ENCODE measurements at regions of chr19 and their contacts with region 1.

Region 1: DNA sequence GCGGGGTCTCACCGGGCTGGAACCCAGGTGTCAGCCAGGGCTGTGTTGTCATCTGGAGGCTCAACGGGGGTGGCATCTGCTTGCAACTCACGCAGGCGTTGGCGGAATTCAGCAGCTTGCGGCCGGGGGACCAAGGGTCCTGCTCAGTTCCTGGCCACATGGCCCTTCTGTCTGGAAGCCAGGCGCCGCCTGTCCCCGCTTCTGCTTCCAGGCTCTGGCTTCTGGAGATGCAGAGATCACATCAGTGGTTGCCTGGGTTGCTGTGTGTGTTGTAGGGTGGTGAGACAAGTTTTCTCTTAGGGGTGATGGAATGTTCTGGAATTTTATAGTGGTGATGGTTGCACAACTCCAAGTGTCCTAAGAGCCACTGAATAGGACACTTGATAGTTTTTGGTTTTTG is 5.0 kb downstream of the ADAT3 start:
- DNase-seq: no peak
- ATAC-seq: no peak
- H3K4me3 ChIP-seq: no peak overlapping the region
- H3K27ac ChIP-seq: no peak overlapping the region
- H3K4me1 ChIP-seq: peaks cover 12% of the 10 kb centered on the region; the same call in 1 of the 3 replicates
- CTCF ChIP-seq: no peak
- EP300 ChIP-seq: no peak
- POLR2A ChIP-seq: no peak
- RAD21 ChIP-seq: no peak

Region 2: DNA sequence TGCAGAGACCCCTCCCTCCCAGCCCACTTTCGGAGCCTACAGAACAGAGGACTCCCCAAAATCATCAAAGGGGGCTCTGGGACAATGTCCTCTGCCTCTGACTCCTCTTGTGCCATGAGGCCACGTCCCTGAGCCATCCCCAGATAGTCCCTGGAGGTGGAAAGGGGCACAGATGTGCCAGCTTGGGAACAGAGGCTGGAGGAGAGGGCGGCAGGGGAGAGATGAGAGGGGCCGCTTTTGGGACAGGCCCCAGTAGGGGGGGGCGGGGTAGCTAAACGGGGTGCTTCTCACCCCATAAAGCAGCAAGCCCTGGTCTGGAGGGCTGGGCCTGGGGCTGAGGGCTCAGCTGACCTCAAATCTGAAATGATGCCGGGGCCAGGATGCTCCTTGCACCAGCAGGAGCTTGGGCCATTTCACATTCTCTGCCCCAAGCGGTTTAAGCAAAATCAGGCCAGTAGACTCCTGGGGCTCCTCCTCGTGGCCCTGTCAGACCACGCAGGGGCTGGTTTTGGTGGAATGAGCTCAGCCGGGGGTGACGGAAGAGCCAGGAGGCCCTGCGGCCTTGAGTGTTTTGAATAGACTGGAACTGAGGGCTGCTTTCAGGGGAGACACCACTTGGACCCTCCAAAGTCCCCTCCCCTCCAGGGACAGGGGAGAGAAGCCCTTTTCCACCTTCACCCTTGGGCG is 129.8 kb before region 1 on chr19:
- CTCF ChIA-PET with region 1: no interaction called
- POLR2A ChIA-PET with region 1: no interaction called
- DNase-seq: peak in 1 of 2 experiments; percentile 53
- ATAC-seq: peak; percentile 66 to 78; a peak in 5 of 6 replicates
- H3K4me3 ChIP-seq: no peak overlapping the region
- H3K27ac ChIP-seq: no peak overlapping the region
- H3K4me1 ChIP-seq: no peaks in the 10 kb centered on the region
- CTCF ChIP-seq: no peak
- EP300 ChIP-seq: no peak
- POLR2A ChIP-seq: no peak
- RAD21 ChIP-seq: no peak; a peak in 1 of 5 replicates

Region 3: GRCh38 chr19:1929021-1929742 is 19.0 kb after region 1 on chr19:
- CTCF ChIA-PET with region 1: interaction called, 14 read pairs
- POLR2A ChIA-PET with region 1: no interaction called
- DNase-seq: peak; percentile 67 to 73
- ATAC-seq: peak; percentile 74 to 94
- H3K4me3 ChIP-seq: peak overlapping the region; percentile 47
- H3K27ac ChIP-seq: peak overlapping the region; percentile 54 to 81
- H3K4me1 ChIP-seq: peaks cover 5% of the 10 kb centered on the region; the same call in 1 of the 3 replicates
- CTCF ChIP-seq: peak; percentile 75
- EP300 ChIP-seq: no peak
- POLR2A ChIP-seq: no peak
- RAD21 ChIP-seq: peak; percentile 61 to 62